Activated naive CD4-positive, alpha-beta T cell treated with anti-CD3 and anti-CD28 coated beads for 36 hours (primary cell): ENCODE measurements at regions of chr7 and their contacts with region 1.

Region 1: GRCh38 chr7:43590862-43591550 is 8.1 kb downstream of the STK17A start:
- DNase-seq: peak; percentile 73
- H3K4me3 Mint-ChIP-seq: peak overlapping the region; percentile 37
- H3K27ac Mint-ChIP-seq: peak overlapping the region; percentile 39
- H3K4me1 Mint-ChIP-seq: peaks cover 81% of the 10 kb centered on the region
- H3K27me3 Mint-ChIP-seq: no peaks in the 10 kb centered on the region

Region 2: DNA sequence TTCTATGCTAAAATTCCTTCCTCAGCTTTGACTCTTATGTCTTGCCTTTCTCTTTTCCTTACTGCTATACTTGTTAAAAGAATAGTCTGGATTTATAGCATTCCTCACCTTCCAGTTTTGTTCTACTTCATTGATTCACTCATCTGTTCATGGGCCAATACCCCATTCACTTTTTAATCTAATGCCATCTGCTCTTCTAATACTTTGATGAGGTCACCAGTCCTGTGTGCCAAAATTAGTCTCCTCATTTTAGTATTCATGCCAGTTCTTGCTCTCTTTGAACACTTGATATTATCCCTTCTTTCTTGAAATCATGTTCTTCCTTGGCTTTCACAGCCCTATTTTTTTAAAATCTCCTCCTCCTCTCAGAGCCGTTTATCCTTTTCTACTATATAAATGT is 11.3 kb after region 1 on chr7:
- CTCF ChIA-PET with region 1: interaction called, 9 read pairs
- intact Hi-C with region 1: loop called (anchors 1 kb)
- DNase-seq: no peak
- H3K4me3 Mint-ChIP-seq: no peak overlapping the region
- H3K27ac Mint-ChIP-seq: no peak overlapping the region
- H3K4me1 Mint-ChIP-seq: peaks cover 46% of the 10 kb centered on the region
- H3K27me3 Mint-ChIP-seq: no peaks in the 10 kb centered on the region

Region 3: GRCh38 chr7:43625980-43626379 is 35.0 kb after region 1 on chr7:
- CTCF ChIA-PET with region 1: interaction called, 3 read pairs
- intact Hi-C with region 1: loop called (anchors 1 kb)
- DNase-seq: no peak
- H3K4me3 Mint-ChIP-seq: no peak overlapping the region
- H3K27ac Mint-ChIP-seq: peak overlapping the region; percentile 66
- H3K4me1 Mint-ChIP-seq: peaks cover 90% of the 10 kb centered on the region
- H3K27me3 Mint-ChIP-seq: no peaks in the 10 kb centered on the region